Right ventricle myocardium inferior (tissue), 1 donor: ENCODE measurements at regions of chr12 and their contacts with region 1.

Region 1: GRCh38 chr12:21607701-21608100 is 3.1 kb upstream of the GYS2 start:
- DNase-seq: no peak
- ATAC-seq: no peak

Region 2: DNA sequence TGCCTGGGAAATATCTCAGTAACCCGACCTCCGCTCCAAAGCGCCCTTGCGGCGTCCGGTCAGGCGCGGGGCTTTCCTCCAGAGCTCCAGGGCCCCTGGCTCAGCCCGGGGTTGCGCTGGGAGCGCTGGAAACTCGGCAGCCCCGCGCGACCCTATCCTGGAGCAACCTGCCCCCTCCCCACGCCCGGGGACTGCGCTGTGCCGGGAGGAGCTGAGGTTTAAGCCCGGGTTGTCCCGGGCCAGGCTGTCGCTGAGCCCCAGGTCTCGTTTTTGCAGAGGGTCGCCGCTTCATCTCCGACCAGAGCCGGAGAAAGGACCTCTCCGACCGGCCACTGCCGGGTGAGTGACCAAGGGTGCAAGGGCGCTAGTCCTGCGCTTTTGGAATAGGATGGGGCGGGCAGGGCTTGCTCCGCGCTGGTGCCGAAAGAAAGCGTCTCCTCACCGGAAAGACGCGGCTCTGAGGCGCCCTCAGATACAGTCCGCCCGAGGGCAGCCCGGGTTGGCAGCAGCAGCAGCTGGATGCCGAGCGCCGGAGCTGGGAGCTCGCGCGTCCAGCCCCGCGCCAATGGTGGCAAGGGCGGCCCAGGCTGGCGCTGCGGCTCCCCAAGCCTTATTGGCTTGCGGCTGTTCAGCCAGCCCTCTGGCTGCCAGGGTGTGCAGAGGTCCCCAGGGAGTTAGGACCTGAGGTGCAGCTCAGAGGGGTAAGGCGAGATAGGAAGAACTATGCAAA is 80.1 kb before region 1 on chr12:
- intact Hi-C with region 1: loop called (anchors 10 kb)
- DNase-seq: peak; percentile 74
- ATAC-seq: peak; percentile 94

Region 3: GRCh38 chr12:21650833-21651396 is 43.2 kb after region 1 on chr12:
- intact Hi-C with region 1: no loop called
- DNase-seq: no peak
- ATAC-seq: no peak

Region 4: DNA sequence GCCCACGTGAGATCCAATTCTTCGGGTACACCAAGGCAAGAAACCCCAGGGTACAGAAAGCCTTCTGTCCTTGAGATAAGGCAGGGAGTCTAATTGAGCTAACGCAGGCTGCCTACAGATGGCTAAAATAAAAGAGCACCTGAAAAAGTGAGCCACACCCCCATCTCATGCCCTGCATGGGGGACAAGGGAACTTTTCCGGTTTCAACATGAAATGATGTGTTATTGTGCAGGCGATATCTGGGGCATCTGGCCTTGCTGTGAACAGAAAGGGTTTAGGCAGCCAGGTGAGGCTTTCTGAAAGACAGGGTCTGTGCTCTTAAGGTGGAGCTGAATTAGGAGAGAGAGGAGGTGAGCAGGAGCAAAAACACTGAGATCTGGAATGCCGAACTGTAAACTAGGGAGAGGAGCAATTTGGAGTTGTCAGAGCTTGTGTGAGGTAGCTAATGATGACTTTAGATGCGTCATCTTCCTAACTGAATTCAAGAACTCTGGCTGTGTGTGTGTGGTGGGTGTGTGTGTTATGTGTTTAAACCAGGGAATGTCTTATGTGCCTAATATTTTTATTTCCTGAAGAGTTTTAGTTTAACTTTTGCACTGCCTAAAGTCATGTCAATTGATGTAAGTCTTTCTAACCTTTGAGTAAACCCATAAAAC is 70.0 kb after region 1 on chr12:
- intact Hi-C with region 1: loop called (anchors 2 kb)
- DNase-seq: no peak
- ATAC-seq: no peak

Region 5: GRCh38 chr12:22018860-22019259 is 411.2 kb after region 1 on chr12:
- intact Hi-C with region 1: loop called (anchors 10 kb)
- DNase-seq: no peak
- ATAC-seq: no peak